B cell (primary cell): ENCODE measurements at regions of chr19 and their contacts with region 1.

Region 1: DNA sequence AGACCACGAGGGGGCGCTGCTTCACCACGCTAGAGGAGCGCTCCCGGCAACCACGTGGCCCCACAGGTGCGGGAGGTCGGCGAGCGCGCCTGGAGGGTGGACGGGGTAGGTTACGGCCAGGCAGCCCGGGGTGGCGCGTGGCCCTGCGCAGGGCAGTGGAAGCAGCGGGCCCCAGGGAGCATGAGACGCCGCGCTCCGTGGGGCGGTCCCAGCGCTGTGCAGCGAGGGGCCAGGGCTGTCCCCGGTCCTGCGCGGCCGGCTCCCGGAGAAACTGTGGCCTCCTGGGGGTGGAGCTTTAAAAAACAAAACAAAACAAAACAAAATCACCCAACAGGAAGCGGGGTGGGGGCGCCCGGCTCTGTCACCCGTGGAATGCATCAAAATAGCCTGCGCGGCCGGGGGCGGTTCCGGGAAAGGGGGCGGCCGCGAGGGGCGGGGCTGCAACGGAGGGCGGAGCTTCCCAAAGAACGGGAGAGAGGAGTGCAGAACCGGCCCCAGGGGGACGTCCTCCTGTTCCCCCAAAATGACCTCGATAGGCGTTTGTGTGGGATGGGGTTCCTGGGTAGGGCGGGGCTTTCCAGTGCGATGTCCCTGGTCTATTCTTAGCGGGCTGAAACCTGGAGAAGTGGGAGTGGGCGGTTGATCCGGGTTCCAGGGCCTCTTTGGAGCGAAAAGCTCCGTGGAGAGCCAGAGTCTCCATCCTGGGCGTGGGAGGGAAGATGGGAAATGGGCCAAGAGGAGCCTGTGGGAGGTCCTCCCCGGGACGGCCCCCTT is 27.3 kb downstream of the NUMBL start:
- DNase-seq: peak; percentile 95
- ATAC-seq: peak; percentile 89
- H3K4me3 ChIP-seq: peak overlapping the region; percentile 11 to 78 (median 67)
- H3K4me3 Mint-ChIP-seq: peak overlapping the region; percentile 89
- H3K27ac ChIP-seq: peak overlapping the region; percentile 64 to 80
- H3K27ac Mint-ChIP-seq: peak overlapping the region; percentile 94
- H3K4me1 ChIP-seq: peaks cover 11 to 15% of the 10 kb centered on the region in 2 donors
- H3K4me1 Mint-ChIP-seq: peaks cover 19% of the 10 kb centered on the region
- H3K27me3 ChIP-seq: no peaks in the 10 kb centered on the region
- H3K27me3 Mint-ChIP-seq: no peaks in the 10 kb centered on the region
- CTCF ChIP-seq: peak; percentile 96

Region 2: DNA sequence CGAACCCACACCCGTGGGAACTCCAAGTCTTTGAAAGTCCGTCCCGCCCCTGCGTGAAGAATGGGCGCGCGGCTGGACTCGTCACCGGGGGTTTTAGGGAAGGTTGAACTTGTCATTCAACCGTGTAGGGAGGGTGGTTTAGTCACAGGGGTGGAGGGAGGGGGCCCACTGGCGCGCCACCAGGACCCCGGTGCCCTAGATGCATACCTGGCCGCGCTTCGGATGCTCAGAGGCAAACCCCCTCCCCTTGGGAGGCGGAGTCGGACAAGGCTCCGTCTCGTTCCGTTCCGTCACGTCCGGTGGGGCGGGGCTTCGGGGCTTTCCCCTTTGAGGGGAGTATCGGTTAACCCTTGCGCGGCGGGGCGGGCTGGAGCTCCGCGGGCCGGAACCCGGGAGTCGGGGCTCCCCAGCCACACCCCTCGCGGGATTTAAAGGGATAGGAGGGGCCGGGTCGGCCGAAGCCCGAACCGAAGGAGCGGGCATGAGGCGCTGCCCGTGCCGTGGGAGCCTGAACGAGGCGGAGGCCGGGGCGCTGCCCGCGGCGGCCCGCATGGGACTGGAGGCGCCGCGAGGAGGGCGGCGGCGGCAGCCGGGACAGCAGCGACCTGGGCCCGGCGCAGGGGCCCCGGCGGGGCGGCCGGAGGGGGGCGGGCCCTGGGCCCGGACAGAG is 53.7 kb after region 1 on chr19 and contains the starts of genes COQ8B and ITPKC:
- CTCF ChIA-PET with region 1: interaction called, 5 read pairs
- POLR2A ChIA-PET with region 1: interaction called, 7 read pairs
- intact Hi-C with region 1: loop called (anchors 1 kb)
- DNase-seq: peak; percentile 98
- ATAC-seq: peak; percentile 75
- H3K4me3 ChIP-seq: peak within 1 kb of the TSS; percentile 79 to 90 (median 83)
- H3K4me3 Mint-ChIP-seq: peak within 1 kb of the TSS; percentile 88
- H3K27ac ChIP-seq: peak within 1 kb of the TSS; percentile 87 to 90
- H3K27ac Mint-ChIP-seq: peak within 1 kb of the TSS; percentile 97
- H3K4me1 ChIP-seq: peaks cover 47 to 64% of the 10 kb centered on the region in 2 donors
- H3K4me1 Mint-ChIP-seq: peaks cover 63% of the 10 kb centered on the region
- H3K27me3 ChIP-seq: no peaks in the 10 kb centered on the region
- H3K27me3 Mint-ChIP-seq: no peaks in the 10 kb centered on the region
- CTCF ChIP-seq: peak; percentile 22
- total RNA-seq, gene COQ8B: 55.4 and 58.9 TPM in 2 replicates
- total RNA-seq, gene ITPKC: 13.1 and 16.0 TPM in 2 replicates

Region 3: GRCh38 chr19:40777937-40778705 is 115.0 kb after region 1 on chr19 and contains the start of gene RAB4B:
- CTCF ChIA-PET with region 1: interaction called, 36 read pairs
- POLR2A ChIA-PET with region 1: interaction called, 21 read pairs
- intact Hi-C with region 1: loop called (anchors 1 kb)
- DNase-seq: peak; percentile 100
- ATAC-seq: peak; percentile 77
- H3K4me3 ChIP-seq: peak within 1 kb of the TSS; percentile 67 to 100 (median 87)
- H3K4me3 Mint-ChIP-seq: peak within 1 kb of the TSS; percentile 99
- H3K27ac ChIP-seq: peak within 1 kb of the TSS; percentile 97 to 99
- H3K27ac Mint-ChIP-seq: peak within 1 kb of the TSS; percentile 99
- H3K4me1 ChIP-seq: peaks cover 49 to 64% of the 10 kb centered on the region in 2 donors
- H3K4me1 Mint-ChIP-seq: peaks cover 64% of the 10 kb centered on the region
- H3K27me3 ChIP-seq: no peaks in the 10 kb centered on the region
- H3K27me3 Mint-ChIP-seq: no peaks in the 10 kb centered on the region
- CTCF ChIP-seq: no peak
- total RNA-seq, gene RAB4B: 104 and 108 TPM in 2 replicates

Region 4: DNA sequence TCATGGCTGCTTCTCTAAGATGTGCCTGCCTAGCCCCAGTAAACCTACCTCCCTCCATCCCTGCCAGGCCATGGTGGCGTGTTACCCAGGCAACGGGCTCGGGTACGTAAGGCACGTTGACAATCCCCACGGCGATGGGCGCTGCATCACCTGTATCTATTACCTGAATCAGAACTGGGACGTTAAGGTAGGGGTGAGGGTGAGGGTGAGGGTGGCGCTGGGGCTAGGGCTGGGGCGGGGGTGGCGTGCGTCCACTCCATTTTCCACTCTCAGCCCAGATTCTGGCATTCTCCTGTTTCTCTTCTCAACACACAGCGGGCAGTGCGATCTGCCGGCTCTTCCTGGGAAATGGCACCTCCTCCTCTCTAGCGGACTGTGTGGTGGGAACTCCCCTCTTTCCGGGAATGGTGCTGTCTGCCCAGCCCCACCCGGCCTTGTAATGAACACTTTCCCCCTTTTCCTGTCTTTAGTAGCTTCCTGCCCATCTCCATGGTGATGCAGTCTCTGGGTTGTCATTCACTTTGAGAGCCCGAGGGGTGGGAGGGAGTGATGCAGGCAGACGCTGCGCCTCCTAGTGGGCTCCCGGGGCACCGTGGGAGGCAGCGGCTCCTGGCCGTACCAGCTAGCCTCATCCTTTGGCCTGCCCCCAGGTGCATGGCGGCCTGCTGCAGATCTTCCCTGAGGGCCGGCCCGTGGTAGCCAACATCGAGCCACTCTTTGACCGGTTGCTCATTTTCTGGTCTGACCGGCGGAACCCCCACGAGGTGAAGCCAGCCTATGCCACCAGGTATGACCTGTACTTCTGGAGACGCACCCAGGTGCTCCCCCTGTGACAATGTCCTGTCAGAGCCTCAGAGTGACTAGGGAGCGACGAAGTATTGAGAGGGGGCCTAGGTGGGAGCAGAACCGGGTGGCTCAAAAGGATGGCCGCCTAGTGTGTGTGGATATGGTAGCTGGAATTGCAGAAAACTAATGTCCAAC is 143.7 kb after region 1 on chr19:
- CTCF ChIA-PET with region 1: interaction called, 12 read pairs
- POLR2A ChIA-PET with region 1: no interaction called
- intact Hi-C with region 1: no loop called
- DNase-seq: peak; percentile 73
- ATAC-seq: peak; percentile 15
- H3K4me3 ChIP-seq: no peak overlapping the region
- H3K4me3 Mint-ChIP-seq: peak overlapping the region; percentile 60
- H3K27ac ChIP-seq: peak overlapping the region; percentile 47 to 86
- H3K27ac Mint-ChIP-seq: peak overlapping the region; percentile 85
- H3K4me1 ChIP-seq: peaks cover 60 to 76% of the 10 kb centered on the region in 2 donors
- H3K4me1 Mint-ChIP-seq: peaks cover 81% of the 10 kb centered on the region
- H3K27me3 ChIP-seq: no peaks in the 10 kb centered on the region
- H3K27me3 Mint-ChIP-seq: no peaks in the 10 kb centered on the region
- CTCF ChIP-seq: peak; percentile 85

Region 5: GRCh38 chr19:40822161-40822560 is 159.1 kb after region 1 on chr19:
- CTCF ChIA-PET with region 1: interaction called, 117 read pairs
- POLR2A ChIA-PET with region 1: interaction called, 6 read pairs
- intact Hi-C with region 1: loop called (anchors 1 kb)
- DNase-seq: no peak
- ATAC-seq: no peak
- H3K4me3 ChIP-seq: no peak overlapping the region
- H3K4me3 Mint-ChIP-seq: no peak overlapping the region
- H3K27ac ChIP-seq: no peak overlapping the region
- H3K27ac Mint-ChIP-seq: no peak overlapping the region
- H3K4me1 ChIP-seq: peaks cover 14 to 28% of the 10 kb centered on the region in 2 donors
- H3K4me1 Mint-ChIP-seq: peaks cover 29% of the 10 kb centered on the region
- H3K27me3 ChIP-seq: no peaks in the 10 kb centered on the region
- H3K27me3 Mint-ChIP-seq: no peaks in the 10 kb centered on the region
- CTCF ChIP-seq: no peak

Region 6: DNA sequence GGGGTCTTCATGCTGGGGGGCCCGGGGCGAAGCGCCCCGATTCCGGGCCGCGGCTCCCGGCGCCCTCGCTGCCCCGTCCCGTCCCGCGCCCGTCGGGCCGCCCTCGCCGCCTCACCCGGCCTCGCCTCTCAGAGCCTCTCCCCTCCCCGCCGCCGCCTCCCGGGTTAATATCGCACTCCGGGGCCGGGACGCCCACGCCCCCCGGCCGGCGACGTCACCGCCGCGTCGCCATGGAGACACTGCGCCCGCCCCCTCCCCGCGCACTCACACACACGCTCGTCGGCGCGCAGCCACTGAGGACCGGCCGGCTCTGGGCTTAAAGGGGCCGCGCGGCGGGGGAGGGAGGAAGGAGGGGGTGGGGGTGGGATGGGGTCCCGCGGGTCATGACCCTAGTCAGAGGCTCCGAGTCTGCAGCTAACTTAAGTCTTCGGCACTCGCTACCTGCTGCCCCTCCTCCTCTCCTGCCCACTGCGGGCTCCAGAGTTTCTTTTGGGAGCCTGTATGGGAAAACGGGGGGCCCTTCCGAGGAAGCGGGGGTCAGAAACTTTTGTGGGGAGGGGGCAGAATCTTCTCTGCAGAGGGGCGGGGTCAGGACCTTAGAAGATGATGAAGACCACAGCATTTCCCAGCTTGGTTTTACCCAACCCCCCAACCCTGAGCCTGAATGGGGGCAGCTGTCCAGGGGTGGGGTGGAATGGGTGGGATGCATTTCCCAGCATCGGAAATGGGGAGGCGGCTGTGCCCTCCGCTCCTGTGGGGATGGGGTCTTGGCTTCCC is 1592.1 kb after region 1 on chr19 and contains the start of gene ERF:
- CTCF ChIA-PET with region 1: no interaction called
- POLR2A ChIA-PET with region 1: interaction called, 10 read pairs
- intact Hi-C with region 1: no loop called
- DNase-seq: peak; percentile 97
- ATAC-seq: peak; percentile 68
- H3K4me3 ChIP-seq: peak within 1 kb of the TSS; percentile 36 to 100 (median 99)
- H3K4me3 Mint-ChIP-seq: peak within 1 kb of the TSS; percentile 85
- H3K27ac ChIP-seq: peak within 1 kb of the TSS; percentile 85 to 94
- H3K27ac Mint-ChIP-seq: peak within 1 kb of the TSS; percentile 96
- H3K4me1 ChIP-seq: peaks cover 23 to 41% of the 10 kb centered on the region in 2 donors
- H3K4me1 Mint-ChIP-seq: peaks cover 24% of the 10 kb centered on the region
- H3K27me3 ChIP-seq: peaks cover 0 to 4% (median 0%) of the 10 kb centered on the region in 4 experiments
- H3K27me3 Mint-ChIP-seq: no peaks in the 10 kb centered on the region
- CTCF ChIP-seq: no peak
- total RNA-seq, gene ERF: 48.6 and 62.1 TPM in 2 replicates